ENCODE measurements at regions of chr19 and their contacts with region 1.

Region 1: GRCh38 chr19:45717166-45717982 is 13.3 kb downstream of the FBXO46 start:
- DNase-seq: peak; percentile 99
- H3K4me3 Mint-ChIP-seq: peak overlapping the region; percentile 96
- H3K27ac Mint-ChIP-seq: peak overlapping the region; percentile 96
- H3K4me1 Mint-ChIP-seq: peaks cover 40% of the 10 kb centered on the region
- H3K27me3 Mint-ChIP-seq: no peaks in the 10 kb centered on the region

Region 2: DNA sequence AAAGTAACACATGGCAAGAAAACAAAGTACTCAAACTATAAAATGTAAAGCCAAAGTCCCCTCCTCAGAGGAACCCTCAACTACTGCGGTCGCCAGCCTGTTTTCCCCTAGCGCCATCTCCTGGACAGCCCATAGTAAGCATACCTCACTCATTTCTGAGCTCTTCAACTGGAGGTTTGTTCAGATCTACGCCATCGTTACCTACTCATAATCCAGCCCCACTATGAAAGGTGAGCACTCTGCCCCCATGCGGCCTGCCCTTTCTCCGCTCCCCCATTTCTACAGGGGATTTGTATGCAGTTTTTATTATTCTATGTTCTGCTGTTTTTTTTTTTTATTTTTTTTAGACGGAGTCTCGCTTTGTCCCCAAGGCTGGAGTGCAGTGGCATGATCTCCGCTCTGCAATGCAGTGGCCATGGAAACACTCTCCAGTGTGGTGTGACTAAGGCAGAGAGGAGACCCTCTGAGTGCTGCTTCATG is 158.9 kb before region 1 on chr19:
- intact Hi-C with region 1: no loop called
- DNase-seq: peak; percentile 57
- H3K4me3 Mint-ChIP-seq: no peak overlapping the region
- H3K27ac Mint-ChIP-seq: no peak overlapping the region
- H3K4me1 Mint-ChIP-seq: peaks cover 10% of the 10 kb centered on the region
- H3K27me3 Mint-ChIP-seq: no peaks in the 10 kb centered on the region

Region 3: GRCh38 chr19:45730389-45731288 is 13.3 kb after region 1 on chr19 and contains the start of gene FBXO46:
- intact Hi-C with region 1: loop called (anchors 1 kb)
- DNase-seq: peak; percentile 95
- H3K4me3 Mint-ChIP-seq: peak within 1 kb of the TSS; percentile 99
- H3K27ac Mint-ChIP-seq: peak within 1 kb of the TSS; percentile 85
- H3K4me1 Mint-ChIP-seq: peaks cover 26% of the 10 kb centered on the region
- H3K27me3 Mint-ChIP-seq: peaks cover 2% of the 10 kb centered on the region
- total RNA-seq, gene FBXO46: 35.1 and 35.4 TPM in 2 replicates

Measured in activated T-helper 1 cell treated with anti-CD3 and anti-CD28 coated beads, Interleukin-12 subunit alpha, Interleukin-12 subunit beta, Interleukin-2, Interleukin-4 antibody, amounts not matched to agents 30 ng/mL and 10 ng/mL and 1 ng/mL, durations not matched to agents 14 hours and 24 hours and 36 hours (primary cell).